CD4-positive, alpha-beta T cell (primary cell): ENCODE measurements at regions of chr11 and their contacts with region 1.

Region 1: GRCh38 chr11:67401495-67402191 is at the start of gene PPP1CA:
- DNase-seq: peak; percentile 83 to 96 (median 92)
- ATAC-seq: peak; percentile 69
- H3K4me3 ChIP-seq: peak within 1 kb of the TSS; percentile 98
- H3K4me3 Mint-ChIP-seq: peak within 1 kb of the TSS; percentile 100
- H3K27ac ChIP-seq: peak within 1 kb of the TSS; percentile 62 to 84
- H3K27ac Mint-ChIP-seq: peak within 1 kb of the TSS; percentile 98
- H3K4me1 ChIP-seq: peaks cover 86% of the 10 kb centered on the region
- H3K4me1 Mint-ChIP-seq: peaks cover 56% of the 10 kb centered on the region
- H3K27me3 ChIP-seq: peaks cover 0 to 3% of the 10 kb centered on the region in 2 experiments
- H3K27me3 Mint-ChIP-seq: no peaks in the 10 kb centered on the region
- CTCF ChIP-seq: no peak
- total RNA-seq, gene PPP1CA: 42.0 to 45.5 TPM

Region 2: GRCh38 chr11:67288452-67289225 is 113.0 kb before region 1 on chr11:
- CTCF ChIA-PET with region 1: interaction called, 3 read pairs
- POLR2A ChIA-PET with region 1: interaction called, 12 read pairs
- intact Hi-C with region 1: no loop called
- DNase-seq: peak; percentile 79 to 95 (median 89)
- ATAC-seq: peak; percentile 63
- H3K4me3 ChIP-seq: peak overlapping the region; percentile 91
- H3K4me3 Mint-ChIP-seq: peak overlapping the region; percentile 83
- H3K27ac ChIP-seq: peak overlapping the region; percentile 90 to 95
- H3K27ac Mint-ChIP-seq: peak overlapping the region; percentile 90
- H3K4me1 ChIP-seq: peaks cover 86% of the 10 kb centered on the region
- H3K4me1 Mint-ChIP-seq: peaks cover 49% of the 10 kb centered on the region
- H3K27me3 ChIP-seq: no peaks in the 10 kb centered on the region
- H3K27me3 Mint-ChIP-seq: no peaks in the 10 kb centered on the region
- CTCF ChIP-seq: peak; percentile 48

Region 3: DNA sequence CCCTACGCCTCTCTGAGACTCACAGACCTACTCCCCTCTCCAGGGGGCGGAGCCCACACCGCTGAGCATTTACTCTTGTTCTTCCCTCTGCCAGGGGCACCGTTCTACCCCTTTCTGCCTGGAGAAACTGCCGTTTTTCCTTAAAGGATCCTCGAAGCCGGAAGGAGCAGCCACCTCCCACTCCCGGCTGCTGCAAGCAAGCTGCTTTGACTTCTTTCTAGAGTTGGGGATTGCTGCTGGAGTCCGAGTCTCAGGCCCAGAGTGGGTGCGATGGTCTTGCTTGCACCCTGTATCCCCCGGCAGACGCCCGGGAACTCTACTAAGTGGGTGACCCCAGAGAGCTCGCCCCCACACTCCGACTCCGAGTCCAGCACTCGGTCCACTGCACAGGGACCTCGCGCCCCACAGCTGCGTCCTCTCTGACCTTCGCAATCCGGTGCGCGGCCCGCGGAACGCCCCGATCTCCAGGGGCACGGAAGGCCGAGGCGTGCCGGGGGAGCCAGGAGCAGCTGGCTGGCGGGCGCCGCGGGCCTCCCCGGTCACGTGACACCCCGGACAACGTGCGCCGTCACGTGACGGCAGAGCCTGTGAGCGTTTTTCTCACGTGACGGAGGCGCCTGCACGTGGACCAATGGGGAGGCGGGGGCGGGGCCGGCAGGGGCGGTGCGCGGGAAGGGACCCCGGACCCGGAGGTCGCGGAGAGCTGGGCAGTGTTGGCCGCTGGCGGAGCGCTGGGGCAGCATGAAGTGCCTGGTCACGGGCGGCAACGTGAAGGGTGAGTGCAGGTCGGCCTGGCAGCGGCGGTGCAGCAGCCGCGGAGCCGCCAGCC is 10.1 kb before region 1 on chr11 and contains the start of gene RAD9A:
- CTCF ChIA-PET with region 1: interaction called, 16 read pairs
- POLR2A ChIA-PET with region 1: interaction called, 61 read pairs
- intact Hi-C with region 1: no loop called
- DNase-seq: peak; percentile 82 to 97 (median 90)
- ATAC-seq: peak; percentile 83
- H3K4me3 ChIP-seq: peak within 1 kb of the TSS; percentile 90
- H3K4me3 Mint-ChIP-seq: peak within 1 kb of the TSS; percentile 88
- H3K27ac ChIP-seq: peak within 1 kb of the TSS; percentile 55 to 77
- H3K27ac Mint-ChIP-seq: peak within 1 kb of the TSS; percentile 76
- H3K4me1 ChIP-seq: peaks cover 42% of the 10 kb centered on the region
- H3K4me1 Mint-ChIP-seq: peaks cover 38% of the 10 kb centered on the region
- H3K27me3 ChIP-seq: no peaks in the 10 kb centered on the region
- H3K27me3 Mint-ChIP-seq: no peaks in the 10 kb centered on the region
- CTCF ChIP-seq: no peak
- total RNA-seq, gene RAD9A: 19.3 to 20.3 TPM

Region 4: DNA sequence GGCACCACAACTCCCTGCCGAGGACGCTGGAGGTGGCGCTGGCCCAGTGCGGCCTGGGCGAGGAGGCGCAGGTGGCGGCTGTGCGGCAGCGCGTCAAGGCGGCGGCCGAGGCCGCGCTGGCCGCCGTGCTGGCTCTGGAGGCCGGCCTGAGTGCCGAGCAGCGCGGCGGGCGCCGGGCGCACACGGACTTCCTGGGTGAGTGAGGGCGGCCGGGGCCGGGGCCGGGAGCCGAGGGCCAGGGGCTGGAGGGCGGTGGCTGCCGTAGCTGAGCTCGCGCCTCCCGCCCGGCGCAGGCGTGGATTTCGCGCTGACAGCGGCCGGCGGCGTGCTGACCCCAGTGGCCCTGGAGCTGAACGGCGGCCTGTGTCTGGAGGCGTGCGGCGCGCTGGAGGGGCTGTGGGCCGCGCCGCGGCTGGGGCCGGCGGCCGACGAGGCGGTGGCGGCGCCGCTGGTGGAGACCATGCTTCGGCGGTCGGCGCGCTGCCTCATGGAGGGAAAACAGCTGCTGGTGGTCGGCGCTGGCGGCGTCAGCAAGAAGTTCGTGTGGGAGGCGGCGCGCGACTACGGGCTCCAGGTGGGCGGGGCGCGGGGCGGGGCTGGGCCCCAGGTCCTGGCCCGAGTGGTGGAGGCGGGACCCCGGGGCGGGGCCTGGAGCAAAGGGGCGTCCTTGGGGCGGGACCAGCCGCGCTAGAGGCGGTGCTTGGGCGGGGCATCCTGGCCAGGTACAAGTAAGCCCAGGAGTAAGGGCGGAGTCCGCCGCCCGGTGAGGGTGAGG is 19.2 kb after region 1 on chr11:
- CTCF ChIA-PET with region 1: interaction called, 46 read pairs
- POLR2A ChIA-PET with region 1: interaction called, 273 read pairs
- intact Hi-C with region 1: loop called (anchors 1 to 2 kb)
- DNase-seq: peak; percentile 97 to 100 (median 99)
- ATAC-seq: peak; percentile 79
- H3K4me3 ChIP-seq: peak overlapping the region; percentile 50
- H3K4me3 Mint-ChIP-seq: peak overlapping the region; percentile 86
- H3K27ac ChIP-seq: peak overlapping the region; percentile 15 to 79
- H3K27ac Mint-ChIP-seq: peak overlapping the region; percentile 94
- H3K4me1 ChIP-seq: peaks cover 57% of the 10 kb centered on the region
- H3K4me1 Mint-ChIP-seq: peaks cover 56% of the 10 kb centered on the region
- H3K27me3 ChIP-seq: no peaks in the 10 kb centered on the region
- H3K27me3 Mint-ChIP-seq: no peaks in the 10 kb centered on the region
- CTCF ChIP-seq: no peak

Region 5: DNA sequence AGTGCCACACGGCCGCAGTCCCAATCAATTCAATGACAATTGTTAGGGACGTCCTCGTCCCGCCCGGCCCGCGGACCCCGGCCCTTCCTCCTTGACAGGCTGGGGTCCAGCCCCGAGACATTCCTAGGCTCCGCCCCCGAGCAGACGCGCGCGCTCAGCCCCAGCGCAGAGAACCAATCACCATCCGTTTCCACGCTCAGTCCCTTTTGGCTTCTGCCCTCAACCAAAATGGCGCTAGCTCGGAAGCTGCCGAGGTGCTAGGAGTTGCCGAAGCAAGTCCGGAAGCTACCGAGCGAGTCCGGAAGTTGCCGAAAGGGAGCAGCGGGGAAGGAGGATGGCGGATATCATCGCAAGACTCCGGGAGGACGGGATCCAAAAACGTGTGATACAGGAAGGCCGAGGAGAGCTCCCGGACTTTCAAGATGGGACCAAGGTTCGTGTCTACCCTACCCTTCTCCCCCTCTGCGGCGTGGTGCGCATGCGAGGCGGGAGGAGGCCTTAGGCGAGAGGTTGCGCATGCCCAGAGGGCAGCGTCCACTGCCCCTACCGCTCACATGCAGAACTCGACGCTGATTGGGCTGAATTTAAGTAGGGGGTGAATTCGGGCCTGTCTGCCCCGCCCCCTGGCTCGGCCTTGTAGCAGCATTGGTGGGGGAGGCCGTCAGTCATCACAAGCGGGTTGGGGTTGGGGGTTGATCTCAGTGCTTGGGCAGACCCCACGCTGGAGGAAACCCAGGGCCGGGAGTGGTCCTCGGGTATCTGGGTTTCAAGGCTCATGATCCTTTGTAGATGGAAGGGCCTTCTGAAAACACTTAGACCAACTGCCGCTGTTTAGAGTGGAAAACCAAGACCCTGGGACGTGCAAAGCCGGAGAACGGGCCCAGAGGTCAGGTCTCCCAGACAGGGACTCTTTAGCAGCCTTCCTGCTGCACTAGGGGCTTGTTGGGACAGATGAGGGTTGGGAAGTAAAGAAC is 81.5 kb after region 1 on chr11 and contains the start of gene AIP:
- CTCF ChIA-PET with region 1: interaction called, 8 read pairs
- POLR2A ChIA-PET with region 1: interaction called, 110 read pairs
- intact Hi-C with region 1: loop called in 1 of 2 experiments (anchors 1 kb)
- DNase-seq: peak; percentile 94 to 99 (median 97)
- ATAC-seq: peak; percentile 77
- H3K4me3 ChIP-seq: peak within 1 kb of the TSS; percentile 80
- H3K4me3 Mint-ChIP-seq: peak within 1 kb of the TSS; percentile 91
- H3K27ac ChIP-seq: peak within 1 kb of the TSS; percentile 90
- H3K27ac Mint-ChIP-seq: peak within 1 kb of the TSS; percentile 95
- H3K4me1 ChIP-seq: peaks cover 63% of the 10 kb centered on the region
- H3K4me1 Mint-ChIP-seq: peaks cover 56% of the 10 kb centered on the region
- H3K27me3 ChIP-seq: no peaks in the 10 kb centered on the region
- H3K27me3 Mint-ChIP-seq: no peaks in the 10 kb centered on the region
- CTCF ChIP-seq: peak; percentile 37
- total RNA-seq, gene AIP: 115 to 117 TPM

Region 6: GRCh38 chr11:67732045-67732787 is 330.6 kb after region 1 on chr11:
- CTCF ChIA-PET with region 1: no interaction called
- POLR2A ChIA-PET with region 1: no interaction called
- intact Hi-C with region 1: no loop called
- DNase-seq: peak; percentile 3 to 84 (median 44)
- ATAC-seq: peak; percentile 99
- H3K4me3 ChIP-seq: peak overlapping the region; percentile 50
- H3K4me3 Mint-ChIP-seq: peak overlapping the region; percentile 57
- H3K27ac ChIP-seq: no peak overlapping the region
- H3K27ac Mint-ChIP-seq: no peak overlapping the region
- H3K4me1 ChIP-seq: peaks cover 7% of the 10 kb centered on the region
- H3K4me1 Mint-ChIP-seq: peaks cover 6% of the 10 kb centered on the region
- H3K27me3 ChIP-seq: peaks cover 0 to 11% of the 10 kb centered on the region in 2 experiments
- H3K27me3 Mint-ChIP-seq: peaks cover 45% of the 10 kb centered on the region
- CTCF ChIP-seq: peak; percentile 44

Region 7: GRCh38 chr11:68542617-68543016 is 1141.0 kb after region 1 on chr11:
- CTCF ChIA-PET with region 1: no interaction called
- POLR2A ChIA-PET with region 1: no interaction called
- intact Hi-C with region 1: no loop called
- DNase-seq: no peak
- ATAC-seq: no peak
- H3K4me3 ChIP-seq: no peak overlapping the region
- H3K4me3 Mint-ChIP-seq: no peak overlapping the region
- H3K27ac ChIP-seq: no peak overlapping the region
- H3K27ac Mint-ChIP-seq: peak overlapping the region; percentile 69
- H3K4me1 ChIP-seq: peaks cover 30% of the 10 kb centered on the region
- H3K4me1 Mint-ChIP-seq: peaks cover 91% of the 10 kb centered on the region
- H3K27me3 ChIP-seq: no peaks in the 10 kb centered on the region
- H3K27me3 Mint-ChIP-seq: no peaks in the 10 kb centered on the region
- CTCF ChIP-seq: no peak